ENCODE measurements at regions of chr17 and their contacts with region 1.

Region 1: GRCh38 chr17:39939588-39940419 is 12.3 kb downstream of the LRRC3C start:
- H3K4me3 ChIP-seq: no peak overlapping the region
- H3K27ac ChIP-seq: no peak overlapping the region
- H3K4me1 ChIP-seq: peaks cover 5% of the 10 kb centered on the region; the same call in 1 of the 2 replicates
- CTCF ChIP-seq: peak; percentile 77

Region 2: GRCh38 chr17:39845052-39845846 is 94.6 kb before region 1 on chr17:
- CTCF ChIA-PET with region 1: no interaction called
- POLR2A ChIA-PET with region 1: no interaction called
- H3K4me3 ChIP-seq: no peak overlapping the region
- H3K27ac ChIP-seq: no peak overlapping the region
- H3K4me1 ChIP-seq: peaks cover 25% of the 10 kb centered on the region
- CTCF ChIP-seq: no peak

Region 3: DNA sequence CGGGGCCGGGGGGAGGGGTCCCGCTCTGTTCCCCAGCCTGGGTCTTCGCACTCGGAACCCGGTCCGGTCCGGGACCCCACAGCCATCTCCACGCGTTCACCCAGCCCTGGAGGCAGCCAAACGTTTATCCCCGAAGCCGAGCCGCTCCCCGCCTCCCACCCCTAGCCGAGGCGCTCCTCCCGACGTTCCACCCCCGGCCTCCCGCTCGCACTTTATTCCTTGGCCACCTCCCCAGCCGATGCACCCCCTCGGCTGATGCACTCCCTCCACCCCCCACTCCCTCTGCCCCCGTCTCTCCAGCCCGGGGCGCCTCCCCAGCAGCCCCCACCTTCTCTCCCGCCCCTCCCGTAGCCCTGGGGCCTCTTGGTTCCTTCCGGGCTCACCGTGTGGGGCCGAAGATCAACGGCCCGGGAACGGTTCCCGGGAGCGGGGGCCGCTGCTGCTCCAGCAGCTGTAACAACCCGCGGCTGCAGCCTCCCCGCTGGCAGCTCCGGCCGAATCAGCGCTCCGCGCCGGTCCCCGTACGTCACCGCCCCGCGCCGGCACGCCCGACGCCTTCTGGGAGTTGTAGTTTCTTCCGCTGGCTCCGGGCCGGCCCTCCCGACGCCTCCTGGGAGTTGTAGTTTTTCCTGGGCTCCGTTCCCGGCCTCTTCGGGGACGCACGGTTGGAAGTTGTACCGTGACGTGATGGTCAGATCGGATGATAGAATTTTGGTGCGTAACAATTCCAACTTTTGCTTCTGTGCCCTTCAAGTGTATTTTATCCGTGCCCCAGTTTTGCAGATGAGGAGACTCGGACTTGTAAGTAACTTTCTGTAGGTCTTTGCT is 12.5 kb before region 1 on chr17 and contains the starts of genes LRRC3C and ORMDL3:
- CTCF ChIA-PET with region 1: interaction called, 16 read pairs
- POLR2A ChIA-PET with region 1: interaction called, 3 read pairs
- H3K4me3 ChIP-seq: peak within 1 kb of the TSS; percentile 92
- H3K27ac ChIP-seq: peak within 1 kb of the TSS; percentile 84
- H3K4me1 ChIP-seq: peaks cover 18% of the 10 kb centered on the region
- CTCF ChIP-seq: 0 out of 2 replicates have a peak, but pooled peaks have one; percentile 11

Region 4: GRCh38 chr17:40005520-40005919 is 65.7 kb after region 1 on chr17:
- CTCF ChIA-PET with region 1: no interaction called
- POLR2A ChIA-PET with region 1: no interaction called
- H3K4me3 ChIP-seq: no peak overlapping the region
- H3K27ac ChIP-seq: no peak overlapping the region
- H3K4me1 ChIP-seq: no peaks in the 10 kb centered on the region
- CTCF ChIP-seq: no peak

Region 5: GRCh38 chr17:40086150-40087044 is 146.6 kb after region 1 on chr17:
- CTCF ChIA-PET with region 1: no interaction called
- POLR2A ChIA-PET with region 1: no interaction called
- H3K4me3 ChIP-seq: no peak overlapping the region
- H3K27ac ChIP-seq: no peak overlapping the region
- H3K4me1 ChIP-seq: no peaks in the 10 kb centered on the region
- CTCF ChIP-seq: peak; percentile 65; the same call in 1 of the 2 replicates

Measured in HEK293 (cell line).